ENCODE measurements at regions of chr6 and their contacts with region 1.

Region 1: GRCh38 chr6:91081452-91082067 is 494.7 kb upstream of the MAP3K7 start:
- DNase-seq: no peak
- ATAC-seq: peak; percentile 51
- H3K4me3 Mint-ChIP-seq: no peak overlapping the region
- H3K27ac Mint-ChIP-seq: no peak overlapping the region
- H3K4me1 Mint-ChIP-seq: peaks cover 28% of the 10 kb centered on the region
- H3K27me3 Mint-ChIP-seq: no peaks in the 10 kb centered on the region
- CTCF ChIP-seq: peak; percentile 46

Region 2: DNA sequence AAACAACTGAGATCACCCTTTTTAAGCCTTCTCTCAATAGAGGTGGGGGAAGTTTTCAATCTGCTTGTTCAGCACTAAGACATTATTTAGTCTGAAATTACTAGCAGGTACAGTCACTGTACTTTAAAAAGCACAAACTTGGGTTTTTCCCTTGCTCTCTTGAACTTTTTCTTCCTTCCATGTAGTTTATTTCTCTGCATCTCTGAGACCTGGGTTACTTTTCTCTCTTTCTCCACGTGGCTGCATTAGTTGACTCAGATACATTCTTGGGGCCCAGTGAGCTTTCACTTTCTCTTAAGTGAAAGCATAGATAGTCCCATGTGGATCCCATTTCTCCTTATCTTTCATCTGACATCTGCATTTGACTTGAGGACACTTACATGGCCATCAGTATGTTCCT is 60.8 kb before region 1 on chr6:
- CTCF ChIA-PET with region 1: no interaction called
- POLR2A ChIA-PET with region 1: no interaction called
- DNase-seq: no peak
- ATAC-seq: no peak
- H3K4me3 Mint-ChIP-seq: no peak overlapping the region
- H3K27ac Mint-ChIP-seq: no peak overlapping the region
- H3K4me1 Mint-ChIP-seq: no peaks in the 10 kb centered on the region
- H3K27me3 Mint-ChIP-seq: no peaks in the 10 kb centered on the region
- CTCF ChIP-seq: no peak

Region 3: GRCh38 chr6:91031581-91031980 is 50.0 kb before region 1 on chr6:
- CTCF ChIA-PET with region 1: interaction called, 10 read pairs
- POLR2A ChIA-PET with region 1: interaction called, 3 read pairs
- DNase-seq: peak; percentile 17
- ATAC-seq: peak; percentile 93
- H3K4me3 Mint-ChIP-seq: no peak overlapping the region
- H3K27ac Mint-ChIP-seq: peak overlapping the region; percentile 19; the same call in 1 of the 2 replicates
- H3K4me1 Mint-ChIP-seq: peaks cover 44% of the 10 kb centered on the region
- H3K27me3 Mint-ChIP-seq: no peaks in the 10 kb centered on the region
- CTCF ChIP-seq: no peak

Region 4: GRCh38 chr6:91155129-91155785 is 73.7 kb after region 1 on chr6:
- CTCF ChIA-PET with region 1: interaction called, 10 read pairs
- POLR2A ChIA-PET with region 1: no interaction called
- DNase-seq: peak; percentile 15
- ATAC-seq: peak; percentile 84
- H3K4me3 Mint-ChIP-seq: no peak overlapping the region
- H3K27ac Mint-ChIP-seq: no peak overlapping the region
- H3K4me1 Mint-ChIP-seq: peaks cover 34% of the 10 kb centered on the region
- H3K27me3 Mint-ChIP-seq: no peaks in the 10 kb centered on the region
- CTCF ChIP-seq: no peak